Endothelial cell of umbilical vein (primary cell): ENCODE measurements at regions of chr18 and their contacts with region 1.

Region 1: DNA sequence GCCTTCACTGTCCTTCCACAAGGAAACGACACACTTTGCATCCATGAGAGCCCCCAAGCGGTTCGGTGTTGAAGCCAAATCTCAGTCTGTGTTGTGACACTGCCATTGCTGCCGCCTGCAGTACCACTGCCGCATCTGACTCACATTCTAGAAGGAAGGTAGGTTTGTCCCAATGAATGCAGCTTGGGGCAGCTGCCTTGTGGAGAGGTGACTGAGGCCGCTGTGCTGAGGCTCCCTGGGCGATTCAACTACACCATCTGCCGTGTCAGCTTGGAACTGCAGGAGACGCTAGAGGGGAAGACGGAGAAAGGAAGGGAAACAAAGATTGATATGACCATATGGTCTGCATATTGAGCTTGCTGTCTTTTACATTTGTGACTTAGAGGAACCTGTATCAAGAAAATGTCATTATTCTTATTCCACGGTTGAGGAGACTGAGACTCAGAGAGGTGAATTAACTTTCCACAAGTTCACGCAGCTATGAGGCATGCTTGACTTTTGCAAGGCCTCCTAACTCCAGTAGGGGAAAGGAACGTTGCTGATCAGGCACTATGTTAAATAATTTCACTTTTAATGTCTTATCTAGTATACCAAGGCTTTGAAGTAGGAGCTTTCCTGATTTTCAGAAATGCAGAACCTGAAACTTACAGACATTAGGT is 43.5 kb upstream of the LMAN1 start:
- DNase-seq: peak; percentile 73
- H3K4me3 ChIP-seq: no peak overlapping the region
- H3K27ac ChIP-seq: no peak overlapping the region
- H3K4me1 ChIP-seq: no peaks in the 10 kb centered on the region
- H3K27me3 ChIP-seq: peaks cover 0 to 1% of the 10 kb centered on the region in 2 experiments
- CTCF ChIP-seq: peak; percentile 84 to 92
- POLR2A ChIP-seq: no peak

Region 2: DNA sequence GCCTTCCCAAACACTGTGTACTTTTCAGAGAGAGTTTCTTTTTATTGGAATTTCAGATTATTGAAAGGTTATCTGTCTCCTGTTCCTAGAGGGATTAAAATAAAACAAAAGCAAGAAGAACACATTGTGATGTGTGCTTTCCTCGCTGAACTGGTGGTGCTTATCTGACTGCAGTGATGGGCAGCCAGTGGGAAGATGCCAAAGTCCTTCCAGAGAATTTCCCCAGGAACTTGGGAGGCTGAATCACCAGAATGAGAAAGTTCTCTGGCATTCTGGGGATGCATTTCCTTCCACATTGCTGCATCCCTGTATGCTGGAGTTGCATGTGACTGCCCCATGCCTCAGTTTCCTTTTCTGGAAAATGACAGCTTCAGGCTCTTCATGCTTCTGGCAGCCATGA is 316.8 kb before region 1 on chr18:
- CTCF ChIA-PET with region 1: interaction called, 44 read pairs
- POLR2A ChIA-PET with region 1: no interaction called
- dilution Hi-C with region 1: no loop called
- intact Hi-C with region 1: loop called (anchors 2 kb)
- DNase-seq: peak; percentile 41
- H3K4me3 ChIP-seq: no peak overlapping the region
- H3K27ac ChIP-seq: no peak overlapping the region
- H3K4me1 ChIP-seq: peaks cover 15% of the 10 kb centered on the region
- H3K27me3 ChIP-seq: peaks cover 0 to 2% of the 10 kb centered on the region in 2 experiments
- CTCF ChIP-seq: no peak
- POLR2A ChIP-seq: no peak

Region 3: DNA sequence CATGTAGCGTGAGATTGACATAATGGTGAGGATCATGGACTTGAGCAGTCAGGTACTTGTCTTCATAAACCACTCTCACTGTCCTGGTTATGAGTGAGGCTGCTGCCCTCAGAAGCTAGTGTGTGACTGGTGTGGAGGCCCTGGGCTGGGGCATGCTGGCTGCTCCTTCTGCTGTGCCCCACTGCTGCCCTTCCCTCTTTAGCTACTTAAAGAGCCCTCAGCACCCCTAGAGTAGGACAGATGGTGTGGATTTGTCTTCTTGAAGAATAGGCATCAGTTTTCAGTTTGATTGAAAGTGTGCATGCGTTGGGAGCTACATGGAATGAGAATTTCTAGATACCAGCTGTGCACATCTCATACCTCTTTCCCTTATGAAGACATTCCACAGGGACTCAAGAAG is 99.6 kb before region 1 on chr18:
- CTCF ChIA-PET with region 1: interaction called, 304 read pairs
- POLR2A ChIA-PET with region 1: no interaction called
- dilution Hi-C with region 1: no loop called
- intact Hi-C with region 1: loop called (anchors 2 kb)
- DNase-seq: no peak
- H3K4me3 ChIP-seq: no peak overlapping the region
- H3K27ac ChIP-seq: no peak overlapping the region
- H3K4me1 ChIP-seq: peaks cover 3% of the 10 kb centered on the region
- H3K27me3 ChIP-seq: peaks cover 8 to 13% of the 10 kb centered on the region in 2 experiments
- CTCF ChIP-seq: no peak
- POLR2A ChIP-seq: no peak

Region 4: GRCh38 chr18:59318460-59319050 is 84.0 kb before region 1 on chr18 and contains the start of gene CPLX4:
- CTCF ChIA-PET with region 1: interaction called, 11 read pairs
- POLR2A ChIA-PET with region 1: no interaction called
- dilution Hi-C with region 1: no loop called
- intact Hi-C with region 1: no loop called
- DNase-seq: no peak
- H3K4me3 ChIP-seq: no peak within 1 kb of the TSS
- H3K27ac ChIP-seq: no peak within 1 kb of the TSS
- H3K4me1 ChIP-seq: no peaks in the 10 kb centered on the region
- H3K27me3 ChIP-seq: peaks cover 10 to 11% of the 10 kb centered on the region in 2 experiments
- CTCF ChIP-seq: no peak
- POLR2A ChIP-seq: no peak
- total RNA-seq, gene CPLX4: not detected in 2 replicates

Region 5: DNA sequence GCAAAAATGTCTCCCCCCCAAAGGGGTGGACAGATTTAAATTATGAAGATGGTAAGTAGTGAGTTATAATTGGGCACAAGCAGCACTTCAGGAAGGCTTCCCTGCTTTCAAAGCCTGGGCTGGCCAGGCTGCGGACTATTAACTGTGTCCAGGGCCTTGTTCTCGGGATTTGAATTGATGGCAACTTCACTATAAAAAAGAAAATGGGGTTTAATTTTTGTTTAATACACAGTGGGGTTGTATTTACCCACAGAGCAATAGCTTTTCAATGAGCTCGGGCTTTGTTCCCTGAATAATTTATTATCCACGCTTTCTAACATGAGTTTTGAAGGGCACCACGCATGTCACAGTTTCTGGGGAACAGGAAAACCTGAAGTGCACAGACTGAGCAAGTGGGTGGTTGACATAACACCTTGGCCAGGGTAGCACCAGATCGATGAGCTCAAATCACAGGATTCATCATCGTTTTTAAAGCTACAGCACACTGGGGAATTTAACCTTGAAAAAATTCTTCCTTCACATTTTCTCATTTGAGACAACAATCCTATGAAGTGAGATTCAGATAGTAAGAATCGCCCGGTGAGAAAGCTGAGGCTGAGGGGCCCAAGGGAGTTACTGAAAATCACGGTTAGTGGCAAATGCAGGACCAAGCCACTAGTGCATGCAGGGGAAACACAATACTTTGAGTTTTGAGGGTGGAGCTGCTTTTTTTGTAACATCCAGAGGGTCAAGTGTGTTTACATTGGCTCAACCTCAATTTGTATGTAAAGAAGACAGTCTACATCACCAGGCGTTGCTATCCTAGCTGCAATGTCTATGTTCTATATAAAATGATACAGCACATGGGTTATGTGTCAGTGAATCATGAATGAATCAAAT is 14.6 kb before region 1 on chr18:
- CTCF ChIA-PET with region 1: interaction called, 20 read pairs
- POLR2A ChIA-PET with region 1: no interaction called
- dilution Hi-C with region 1: no loop called
- intact Hi-C with region 1: no loop called
- DNase-seq: no peak
- H3K4me3 ChIP-seq: no peak overlapping the region
- H3K27ac ChIP-seq: no peak overlapping the region
- H3K4me1 ChIP-seq: no peaks in the 10 kb centered on the region
- H3K27me3 ChIP-seq: peaks cover 0 to 7% of the 10 kb centered on the region in 2 experiments
- CTCF ChIP-seq: no peak
- POLR2A ChIP-seq: no peak

Region 6: GRCh38 chr18:59419386-59419785 is 16.8 kb after region 1 on chr18:
- CTCF ChIA-PET with region 1: interaction called, 11 read pairs
- POLR2A ChIA-PET with region 1: no interaction called
- dilution Hi-C with region 1: no loop called
- intact Hi-C with region 1: no loop called
- DNase-seq: no peak
- H3K4me3 ChIP-seq: no peak overlapping the region
- H3K27ac ChIP-seq: no peak overlapping the region
- H3K4me1 ChIP-seq: no peaks in the 10 kb centered on the region
- H3K27me3 ChIP-seq: no peaks in the 10 kb centered on the region
- CTCF ChIP-seq: no peak
- POLR2A ChIP-seq: no peak